ENCODE measurements at regions of chr11 and their contacts with region 1.

Region 1: GRCh38 chr11:128720522-128720985 is 26.7 kb downstream of the FLI1 start:
- DNase-seq: peak in 1 of 3 donors; percentile 62
- H3K4me3 ChIP-seq: peak overlapping the region in 6 of 7 experiments; percentile 7 to 60 (median 26)
- H3K27ac ChIP-seq: peak overlapping the region; percentile 42 to 70
- H3K4me1 ChIP-seq: peaks cover 59 to 98% (median 93%) of the 10 kb centered on the region in 4 experiments
- H3K27me3 ChIP-seq: no peaks in the 10 kb centered on the region

Region 2: GRCh38 chr11:128669506-128670270 is 50.9 kb before region 1 on chr11:
- CTCF ChIA-PET with region 1: no interaction called
- POLR2A ChIA-PET with region 1: no interaction called
- DNase-seq: peak in 2 of 3 donors; percentile 70 to 81
- H3K4me3 ChIP-seq: no peak overlapping the region
- H3K27ac ChIP-seq: no peak overlapping the region
- H3K4me1 ChIP-seq: peaks cover 10 to 60% (median 38%) of the 10 kb centered on the region in 4 experiments
- H3K27me3 ChIP-seq: no peaks in the 10 kb centered on the region

Region 3: DNA sequence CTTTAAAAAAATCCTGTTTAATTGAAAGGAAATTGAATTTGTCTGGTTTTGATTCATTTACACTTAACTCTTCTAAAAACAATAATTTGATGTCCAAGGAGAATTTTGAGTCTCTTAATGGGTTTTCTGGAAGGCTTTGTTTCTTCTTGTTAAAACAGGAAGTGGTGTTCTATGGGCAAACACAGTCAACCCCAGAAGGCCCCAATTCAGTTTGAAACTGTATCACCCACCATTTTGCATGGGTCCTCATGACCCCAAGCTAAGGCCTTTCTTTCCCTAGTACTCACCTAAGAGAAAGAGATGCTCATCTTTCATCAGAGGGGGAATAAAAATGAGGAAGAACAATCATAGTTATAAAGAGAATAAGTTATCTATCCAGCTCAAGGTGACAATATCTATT is 16.0 kb before region 1 on chr11:
- CTCF ChIA-PET with region 1: interaction called, 14 read pairs
- POLR2A ChIA-PET with region 1: interaction called, 6 read pairs
- DNase-seq: peak in 1 of 3 donors; percentile 68
- H3K4me3 ChIP-seq: peak overlapping the region in 1 of 7 experiments; percentile 3
- H3K27ac ChIP-seq: no peak overlapping the region
- H3K4me1 ChIP-seq: peaks cover 47 to 93% (median 80%) of the 10 kb centered on the region in 4 experiments
- H3K27me3 ChIP-seq: no peaks in the 10 kb centered on the region

Region 4: DNA sequence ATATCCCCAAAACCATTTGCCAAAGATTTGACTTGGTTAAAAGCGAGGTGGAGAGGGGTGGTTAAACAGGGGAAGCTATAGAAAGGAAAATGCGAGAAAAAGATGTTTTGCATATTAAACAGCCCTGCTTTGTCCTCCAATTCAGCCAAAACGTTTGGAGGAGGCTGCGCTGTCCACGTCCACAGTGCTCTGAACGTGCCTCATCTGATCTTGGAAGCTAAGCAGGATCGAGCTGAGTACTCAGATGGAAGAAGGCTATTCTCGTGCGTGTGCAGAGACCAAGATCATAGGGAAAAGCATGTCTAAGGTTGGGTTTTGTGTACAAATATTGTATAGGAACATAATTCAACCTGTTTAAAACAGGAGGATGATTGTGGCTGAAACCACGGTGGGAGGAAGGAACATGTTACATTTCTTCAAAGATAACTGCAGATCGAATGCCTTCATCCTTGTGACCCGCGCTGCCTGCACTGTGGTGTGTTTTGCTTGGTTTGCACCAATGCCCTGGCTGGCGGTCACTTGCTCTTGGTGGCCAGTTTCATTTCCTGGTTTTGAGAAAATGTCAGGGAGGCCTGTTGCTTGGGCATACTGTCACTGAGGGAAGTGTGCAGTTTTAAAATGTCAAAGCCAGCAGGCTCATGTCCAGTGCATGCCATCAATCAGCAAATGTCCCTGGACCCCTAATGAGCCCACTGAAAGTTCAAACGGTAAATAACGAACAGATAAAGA is 13.7 kb after region 1 on chr11:
- CTCF ChIA-PET with region 1: interaction called, 35 read pairs
- POLR2A ChIA-PET with region 1: interaction called, 5 read pairs
- DNase-seq: no peak
- H3K4me3 ChIP-seq: peak overlapping the region in 5 of 7 experiments; percentile 0 to 32 (median 24)
- H3K27ac ChIP-seq: no peak overlapping the region
- H3K4me1 ChIP-seq: peaks cover 66 to 98% (median 83%) of the 10 kb centered on the region in 4 experiments
- H3K27me3 ChIP-seq: no peaks in the 10 kb centered on the region

Measured in common myeloid progenitor, CD34-positive (primary cell).